ENCODE measurements at regions of chr1 and their contacts with region 1.

Region 1: GRCh38 chr1:77759071-77760028 is at the start of gene USP33:
- DNase-seq: peak; percentile 95
- ATAC-seq: peak; percentile 98
- H3K4me3 Mint-ChIP-seq: peak within 1 kb of the TSS; percentile 89
- H3K27ac Mint-ChIP-seq: peak within 1 kb of the TSS; percentile 92
- H3K4me1 Mint-ChIP-seq: peaks cover 41% of the 10 kb centered on the region
- H3K27me3 Mint-ChIP-seq: no peaks in the 10 kb centered on the region
- total RNA-seq, gene USP33: 36.3 to 36.8 TPM

Region 2: DNA sequence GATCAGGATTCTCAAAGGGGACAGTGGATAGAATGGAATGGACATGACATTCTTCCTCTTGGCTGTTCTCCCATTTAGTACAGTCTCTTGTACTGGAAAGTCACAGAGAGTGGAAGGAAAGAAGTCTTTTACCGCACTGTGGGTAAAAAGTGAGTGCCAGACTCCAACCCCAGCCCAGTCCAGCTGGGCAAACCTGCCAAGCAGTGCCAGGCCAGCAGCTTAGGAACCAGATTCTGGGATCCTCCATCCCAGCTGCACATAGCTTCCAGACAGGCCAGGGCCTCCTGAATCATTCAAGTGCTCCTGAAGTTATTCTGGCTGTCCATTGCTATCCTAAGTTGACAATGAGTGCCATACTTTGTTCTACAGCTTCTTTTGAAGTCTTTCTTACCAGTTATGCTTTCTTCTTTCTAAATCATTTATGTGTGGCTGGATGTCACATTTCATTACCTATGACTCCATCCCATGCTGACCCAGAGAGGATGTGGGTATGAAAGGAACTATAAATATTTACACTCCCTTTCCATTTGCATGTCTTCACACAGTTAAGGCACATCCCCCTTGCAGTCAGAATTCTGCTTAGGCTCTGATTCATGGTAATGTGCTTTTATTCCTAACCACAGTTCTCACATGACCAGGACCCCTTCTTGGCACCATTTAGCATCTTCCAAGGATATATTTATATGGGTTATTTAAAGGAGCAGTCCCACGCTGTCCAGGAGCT is 388.6 kb before region 1 on chr1:
- CTCF ChIA-PET with region 1: no interaction called
- POLR2A ChIA-PET with region 1: no interaction called
- intact Hi-C with region 1: no loop called
- DNase-seq: peak; percentile 15
- ATAC-seq: peak; percentile 95
- H3K4me3 Mint-ChIP-seq: no peak overlapping the region
- H3K27ac Mint-ChIP-seq: no peak overlapping the region
- H3K4me1 Mint-ChIP-seq: peaks cover 24% of the 10 kb centered on the region
- H3K27me3 Mint-ChIP-seq: no peaks in the 10 kb centered on the region

Region 3: DNA sequence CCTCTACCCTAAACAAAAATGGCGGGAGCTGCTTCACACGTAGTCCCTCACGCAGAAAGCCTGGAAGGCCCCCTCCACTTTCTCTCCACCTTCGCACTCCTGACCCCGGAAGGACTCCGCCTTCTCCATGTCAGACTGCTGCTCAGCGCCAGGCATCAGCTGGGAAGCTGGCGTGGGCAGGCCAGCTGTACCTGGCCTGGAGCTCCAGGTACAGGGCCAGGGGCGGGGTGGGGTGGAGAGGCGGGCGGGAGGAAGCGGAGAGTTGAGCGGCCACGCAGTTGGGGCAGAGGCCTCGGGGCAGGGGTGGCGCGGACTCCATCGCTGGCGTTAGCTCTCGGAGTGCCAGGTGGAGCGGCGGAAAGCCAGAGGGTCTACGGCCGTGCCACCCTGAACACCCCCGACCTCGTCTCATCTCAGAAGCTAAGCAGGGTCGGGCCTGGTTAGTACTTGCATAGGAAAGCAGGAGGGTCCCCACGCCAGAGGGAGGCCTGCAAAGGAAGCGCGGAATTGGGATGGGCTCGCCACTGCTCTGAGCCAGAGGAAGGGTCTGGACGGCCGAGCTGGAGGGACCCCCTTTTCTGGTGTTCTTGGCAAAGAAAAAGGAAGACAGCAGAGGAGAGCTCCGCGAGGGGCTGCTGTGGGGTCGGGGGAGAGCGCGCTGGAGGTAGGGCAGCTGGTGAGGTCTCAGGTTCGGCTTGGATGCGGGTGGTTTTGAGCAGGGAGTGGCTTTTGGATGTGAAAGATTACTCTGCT is 20.4 kb after region 1 on chr1 and contains the start of gene MIGA1:
- CTCF ChIA-PET with region 1: no interaction called
- POLR2A ChIA-PET with region 1: no interaction called
- intact Hi-C with region 1: loop called (anchors 1 kb)
- DNase-seq: peak; percentile 91
- ATAC-seq: peak; percentile 96
- H3K4me3 Mint-ChIP-seq: peak within 1 kb of the TSS; percentile 91
- H3K27ac Mint-ChIP-seq: peak within 1 kb of the TSS; percentile 93
- H3K4me1 Mint-ChIP-seq: peaks cover 34% of the 10 kb centered on the region
- H3K27me3 Mint-ChIP-seq: no peaks in the 10 kb centered on the region
- total RNA-seq, gene MIGA1: 7.2 to 9.0 TPM

Region 4: DNA sequence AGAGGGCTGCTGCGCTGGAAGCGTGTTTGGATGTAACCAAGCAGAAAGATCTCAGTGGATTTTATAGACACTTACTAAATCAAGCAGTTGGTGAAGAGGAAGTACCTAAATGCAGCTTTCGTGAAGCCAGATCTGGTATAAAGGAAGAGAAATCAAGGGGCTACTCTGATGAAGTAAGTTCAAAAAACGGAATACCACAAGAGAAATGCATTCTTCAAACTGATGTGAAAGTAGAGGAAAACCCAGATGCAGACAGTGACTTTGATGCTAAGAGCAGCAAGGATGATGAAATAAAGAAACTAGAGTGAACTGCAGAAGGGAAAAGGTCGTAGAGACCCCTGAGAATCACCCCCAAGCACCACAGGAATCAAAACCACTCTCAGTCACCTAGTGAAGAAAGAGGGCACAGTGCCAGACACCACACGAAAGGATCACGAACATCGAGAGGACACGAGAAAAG is 88.3 kb after region 1 on chr1:
- CTCF ChIA-PET with region 1: no interaction called
- POLR2A ChIA-PET with region 1: no interaction called
- intact Hi-C with region 1: no loop called
- DNase-seq: peak; percentile 29
- ATAC-seq: peak; percentile 26
- H3K4me3 Mint-ChIP-seq: no peak overlapping the region
- H3K27ac Mint-ChIP-seq: no peak overlapping the region
- H3K4me1 Mint-ChIP-seq: peaks cover 3% of the 10 kb centered on the region
- H3K27me3 Mint-ChIP-seq: no peaks in the 10 kb centered on the region

Region 5: GRCh38 chr1:78045926-78046778 is 286.8 kb after region 1 on chr1 and contains the start of gene GIPC2:
- CTCF ChIA-PET with region 1: no interaction called
- POLR2A ChIA-PET with region 1: no interaction called
- intact Hi-C with region 1: loop called in 1 of 2 experiments (anchors 5 kb)
- DNase-seq: peak; percentile 62
- ATAC-seq: peak; percentile 72
- H3K4me3 Mint-ChIP-seq: peak within 1 kb of the TSS; percentile 66
- H3K27ac Mint-ChIP-seq: no peak within 1 kb of the TSS
- H3K4me1 Mint-ChIP-seq: peaks cover 29% of the 10 kb centered on the region
- H3K27me3 Mint-ChIP-seq: peaks cover 33% of the 10 kb centered on the region
- total RNA-seq, gene GIPC2: 0.05 to 0.09 TPM

Measured in activated CD4-positive, alpha-beta T cell treated with anti-CD3 and anti-CD28 coated beads for 36 hours (primary cell).